ENCODE measurements at regions of chr3 and their contacts with region 1.

Region 1: DNA sequence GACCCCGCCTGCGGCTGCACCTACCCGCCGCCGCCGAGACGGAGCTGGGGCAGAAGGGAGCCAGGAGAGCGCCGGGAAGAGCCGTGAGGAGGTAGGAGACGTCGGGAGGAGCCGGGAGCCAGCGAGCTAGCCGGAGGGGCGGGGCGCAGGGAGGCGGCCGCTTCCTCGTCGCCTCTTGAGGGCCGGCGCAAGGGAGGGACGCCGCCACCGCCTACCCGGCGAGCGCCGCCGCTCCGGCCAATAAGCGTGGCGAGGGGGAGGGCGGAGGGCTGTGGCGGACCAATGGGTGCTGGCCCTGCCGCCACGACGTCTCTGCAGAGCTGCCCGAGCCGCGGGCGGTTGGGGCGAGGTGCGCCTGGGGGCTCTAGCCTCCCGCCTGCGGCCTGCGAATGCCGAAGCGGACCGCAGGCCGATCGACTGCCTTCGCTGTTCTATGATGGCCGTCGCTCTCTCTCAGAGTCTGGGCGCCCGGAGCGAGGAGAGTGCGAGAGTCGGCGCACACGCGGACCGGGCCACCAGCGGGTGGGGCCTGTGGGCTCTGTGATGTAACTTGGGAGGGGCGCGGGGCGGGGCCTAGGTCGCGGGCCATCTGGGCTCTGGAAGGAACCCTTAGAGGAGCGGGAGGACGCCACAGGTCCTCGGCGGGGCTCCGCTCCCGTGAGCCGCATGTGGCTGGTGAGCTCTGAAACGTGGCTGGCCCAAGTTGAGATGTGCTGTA is 72.7 kb upstream of the MAP4 start:
- DNase-seq: peak; percentile 89
- ATAC-seq: peak; percentile 96
- H3K4me3 ChIP-seq: peak overlapping the region; percentile 94 to 96
- H3K27ac ChIP-seq: peak overlapping the region; percentile 97
- H3K4me1 ChIP-seq: peaks cover 11 to 23% of the 10 kb centered on the region in 2 experiments
- H3K27me3 ChIP-seq: no peaks in the 10 kb centered on the region
- CTCF ChIP-seq: no peak
- POLR2A ChIP-seq: peak; percentile 89
- RAD21 ChIP-seq: no peak

Region 2: DNA sequence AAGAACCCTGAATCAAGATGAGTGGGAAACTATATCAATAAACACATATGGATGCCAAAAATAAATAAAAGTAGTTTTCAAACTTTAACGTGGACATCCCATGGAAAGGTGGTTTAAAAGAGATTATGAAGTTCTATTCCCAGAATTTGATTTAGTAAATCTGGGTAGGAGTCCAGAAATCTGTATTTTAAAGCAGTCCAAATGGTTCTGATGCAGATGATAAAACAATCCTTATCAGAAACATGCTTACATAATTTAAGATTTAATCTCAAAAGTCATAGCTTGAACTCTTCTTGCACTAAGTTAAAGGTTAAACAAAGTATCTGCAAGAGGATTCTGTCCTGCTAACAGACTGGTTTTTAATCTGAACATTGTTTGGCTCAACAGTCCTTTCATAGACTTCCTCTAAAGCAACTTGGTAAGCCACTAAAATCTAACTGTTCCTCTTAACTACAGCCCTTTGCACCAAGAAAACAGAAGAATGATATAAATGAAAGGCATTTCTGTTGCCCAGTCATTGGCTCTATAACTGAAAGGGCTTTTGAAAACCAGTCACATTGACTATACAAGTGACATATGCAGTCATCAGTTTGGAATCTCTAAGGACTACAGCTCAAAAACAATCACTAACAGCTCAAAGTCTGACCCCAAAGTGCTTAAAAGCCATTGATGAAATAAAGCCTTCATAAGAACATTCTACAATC is 49.3 kb before region 1 on chr3:
- CTCF ChIA-PET with region 1: no interaction called
- POLR2A ChIA-PET with region 1: interaction called, 3 read pairs
- RAD21 ChIA-PET with region 1: no interaction called
- intact Hi-C with region 1: loop called (anchors 5 kb)
- DNase-seq: peak; percentile 74
- ATAC-seq: peak; percentile 62
- H3K4me3 ChIP-seq: peak overlapping the region in 1 of 2 experiments; percentile 23; a peak in 2 of 4 replicates
- H3K27ac ChIP-seq: peak overlapping the region; percentile 81
- H3K4me1 ChIP-seq: peaks cover 58 to 73% of the 10 kb centered on the region in 2 experiments
- H3K27me3 ChIP-seq: no peaks in the 10 kb centered on the region
- CTCF ChIP-seq: no peak
- POLR2A ChIP-seq: no peak
- RAD21 ChIP-seq: no peak

Region 3: GRCh38 chr3:48188266-48189201 is 99.6 kb after region 1 on chr3 and contains the start of gene CDC25A:
- CTCF ChIA-PET with region 1: no interaction called
- POLR2A ChIA-PET with region 1: no interaction called
- RAD21 ChIA-PET with region 1: no interaction called
- intact Hi-C with region 1: no loop called
- DNase-seq: peak; percentile 98
- ATAC-seq: peak; percentile 97
- H3K4me3 ChIP-seq: peak within 1 kb of the TSS; percentile 84 to 90
- H3K27ac ChIP-seq: peak within 1 kb of the TSS; percentile 67
- H3K4me1 ChIP-seq: peaks cover 11 to 29% of the 10 kb centered on the region in 2 experiments; a peak in 3 of 4 replicates
- H3K27me3 ChIP-seq: no peaks in the 10 kb centered on the region
- CTCF ChIP-seq: no peak
- POLR2A ChIP-seq: peak; percentile 50
- RAD21 ChIP-seq: no peak
- total RNA-seq, gene CDC25A: 19.6 TPM